Sigmoid colon (tissue), 7 donors: ENCODE measurements at regions of chr10 and their contacts with region 1.

Region 1: DNA sequence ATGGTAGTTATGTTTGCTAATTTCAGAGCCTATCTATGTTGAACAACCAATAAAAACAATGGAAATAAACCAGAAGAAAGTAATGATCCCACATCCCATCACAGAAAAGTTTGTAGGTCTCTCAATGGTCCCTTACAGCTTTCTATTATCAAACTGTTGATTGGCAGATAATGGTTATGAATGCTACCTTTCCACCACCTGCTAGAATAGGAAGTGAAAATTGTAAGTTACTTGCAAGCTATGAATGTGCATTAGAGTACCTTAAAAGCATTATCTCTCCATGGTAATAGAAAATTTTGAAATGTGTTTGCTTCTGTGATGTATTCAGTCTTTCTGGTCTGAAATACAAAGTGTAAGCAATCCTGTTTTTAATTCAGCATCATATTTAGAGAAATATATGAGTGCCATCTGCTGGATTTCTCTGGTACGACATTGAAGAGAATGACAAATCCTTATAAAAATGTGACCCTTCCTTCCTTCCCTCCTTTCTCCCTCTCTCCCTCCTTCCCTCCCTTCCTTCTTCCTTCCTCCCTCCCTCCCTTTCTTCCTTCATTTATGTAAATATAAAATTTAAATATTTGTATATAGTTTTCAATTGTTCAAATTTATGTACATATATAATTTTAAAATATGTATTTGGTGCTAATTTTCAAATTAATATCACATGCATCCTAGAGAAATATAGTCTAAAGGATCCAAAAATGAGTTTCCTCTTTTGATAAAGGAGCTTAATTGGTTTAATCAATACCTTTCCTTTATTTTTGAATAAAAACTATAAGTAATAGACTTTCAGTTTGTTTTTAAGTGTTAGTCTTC is 41.4 kb upstream of the PNLIPRP3 start:
- DNase-seq: no peak
- H3K4me3 ChIP-seq: no peak overlapping the region
- H3K27ac ChIP-seq: no peak overlapping the region
- H3K4me1 ChIP-seq: no peaks in the 10 kb centered on the region
- H3K27me3 ChIP-seq: no peaks in the 10 kb centered on the region
- CTCF ChIP-seq: peak; percentile 7 to 56 (median 42)
- EP300 ChIP-seq: no peak
- POLR2A ChIP-seq: no peak

Region 2: DNA sequence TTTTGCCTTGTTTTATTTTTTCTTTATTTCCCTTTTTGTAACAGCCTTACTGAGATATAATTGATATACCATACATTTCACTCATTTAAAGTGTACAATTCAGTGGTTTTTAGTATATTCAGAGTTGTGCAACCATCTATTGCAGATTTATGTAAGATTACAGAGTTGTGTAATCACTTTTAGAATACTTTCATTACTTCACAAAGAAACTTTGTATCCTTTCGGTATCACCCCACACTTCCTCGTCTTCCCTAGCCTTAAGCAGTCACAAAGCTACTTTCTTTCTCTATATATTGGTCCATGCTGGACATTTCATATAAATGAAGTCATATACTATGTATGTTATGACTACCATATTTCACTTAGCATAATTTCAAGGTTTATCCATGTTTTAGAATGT is 1218.5 kb before region 1 on chr10:
- intact Hi-C with region 1: loop called (anchors 10 kb)
- DNase-seq: no peak
- H3K4me3 ChIP-seq: no peak overlapping the region
- H3K27ac ChIP-seq: no peak overlapping the region
- H3K4me1 ChIP-seq: no peaks in the 10 kb centered on the region
- H3K27me3 ChIP-seq: no peaks in the 10 kb centered on the region
- CTCF ChIP-seq: no peak
- EP300 ChIP-seq: no peak
- POLR2A ChIP-seq: no peak

Region 3: DNA sequence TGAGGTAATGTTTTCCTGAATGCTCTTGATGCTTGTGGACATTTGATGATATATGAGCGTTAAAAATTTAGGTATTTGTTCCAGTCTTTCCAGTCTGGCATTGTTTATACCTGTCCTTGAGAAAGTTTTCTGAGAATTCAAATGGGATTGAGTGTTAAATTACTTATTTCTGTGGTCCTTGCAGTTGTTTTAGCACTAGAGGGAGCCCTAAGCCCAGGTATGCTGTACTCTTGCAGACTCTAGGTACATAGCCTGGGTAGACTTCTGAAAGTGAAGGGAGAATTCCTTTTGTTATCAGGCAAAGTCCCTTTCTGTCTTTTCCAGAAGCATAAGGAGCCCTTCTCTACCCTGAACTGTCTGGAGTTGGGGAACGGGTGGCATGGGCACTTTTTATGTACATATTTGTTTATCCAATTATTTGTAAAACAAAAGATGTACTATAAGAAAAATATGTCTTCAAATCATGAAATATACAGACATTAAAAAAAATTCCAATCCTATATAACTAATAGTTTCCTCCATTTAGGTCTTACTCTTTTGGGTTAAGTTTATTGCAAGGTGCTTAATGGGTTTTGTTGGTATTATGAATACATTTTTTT is 1030.9 kb before region 1 on chr10:
- intact Hi-C with region 1: loop called (anchors 5 kb)
- DNase-seq: no peak
- H3K4me3 ChIP-seq: no peak overlapping the region
- H3K27ac ChIP-seq: no peak overlapping the region
- H3K4me1 ChIP-seq: no peaks in the 10 kb centered on the region
- H3K27me3 ChIP-seq: no peaks in the 10 kb centered on the region
- CTCF ChIP-seq: peak in 3 of 4 experiments; percentile 9 to 27 (median 22)
- EP300 ChIP-seq: no peak
- POLR2A ChIP-seq: no peak

Region 4: DNA sequence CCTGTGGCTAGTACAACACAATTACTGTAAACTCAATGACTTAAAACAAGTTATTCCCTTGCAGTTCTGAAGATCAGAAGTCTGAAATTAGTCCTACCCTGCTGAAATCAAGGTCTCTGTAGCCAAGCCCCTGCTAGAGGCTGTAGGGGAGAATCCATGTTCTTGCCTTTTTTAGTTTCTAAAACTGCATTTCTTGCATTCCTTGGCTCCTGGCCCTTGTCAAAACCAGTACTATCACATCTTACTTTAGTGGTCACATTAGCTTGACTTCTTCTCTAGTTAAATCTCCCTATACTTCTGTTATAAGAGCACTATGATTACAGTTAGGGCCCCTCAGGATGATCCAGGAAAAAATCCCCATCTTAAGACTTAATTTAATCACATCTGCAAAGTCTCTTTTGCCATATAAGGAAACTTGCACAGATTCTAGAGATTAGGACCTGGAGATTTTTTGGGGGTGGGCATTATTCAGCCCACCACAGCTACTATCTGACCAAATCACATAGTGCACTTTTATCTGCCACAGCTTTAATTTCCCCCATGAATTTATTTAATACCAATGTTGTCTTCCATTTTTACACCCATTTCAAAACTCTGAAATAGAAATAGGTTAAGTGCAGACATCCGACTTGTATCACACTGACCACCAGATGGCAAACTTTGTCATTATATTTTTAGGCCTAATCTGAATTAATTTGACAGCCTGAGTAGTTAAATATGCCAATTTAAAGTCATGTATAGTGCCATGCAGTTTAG is 680.0 kb before region 1 on chr10:
- intact Hi-C with region 1: loop called (anchors 5 kb)
- DNase-seq: no peak
- H3K4me3 ChIP-seq: no peak overlapping the region
- H3K27ac ChIP-seq: no peak overlapping the region
- H3K4me1 ChIP-seq: no peaks in the 10 kb centered on the region
- H3K27me3 ChIP-seq: no peaks in the 10 kb centered on the region
- CTCF ChIP-seq: no peak
- EP300 ChIP-seq: no peak
- POLR2A ChIP-seq: no peak

Region 5: GRCh38 chr10:115790220-115790619 is 596.0 kb before region 1 on chr10:
- intact Hi-C with region 1: loop called (anchors 10 kb)
- DNase-seq: no peak
- H3K4me3 ChIP-seq: no peak overlapping the region
- H3K27ac ChIP-seq: no peak overlapping the region
- H3K4me1 ChIP-seq: no peaks in the 10 kb centered on the region
- H3K27me3 ChIP-seq: no peaks in the 10 kb centered on the region
- CTCF ChIP-seq: no peak
- EP300 ChIP-seq: no peak
- POLR2A ChIP-seq: no peak

Region 6: DNA sequence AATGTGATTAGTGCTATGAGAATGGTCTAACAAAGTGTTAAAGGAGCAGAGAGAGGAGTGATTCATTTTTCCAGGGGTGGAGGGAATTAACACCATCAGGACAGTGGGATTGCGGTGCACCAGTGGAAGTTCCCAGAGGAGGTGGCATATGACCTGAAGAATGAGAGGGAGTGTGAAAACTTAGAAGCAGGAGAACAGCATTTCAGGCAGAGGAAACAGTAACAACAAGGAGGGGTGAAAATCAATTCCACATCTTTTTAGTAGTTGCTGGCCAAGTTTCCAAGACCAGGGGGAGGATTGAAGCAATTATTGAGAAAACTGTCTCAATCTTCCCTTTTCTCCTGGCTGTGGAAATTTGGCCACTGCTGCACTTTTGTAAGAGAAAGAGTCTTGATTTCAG is 85.7 kb before region 1 on chr10:
- intact Hi-C with region 1: no loop called
- DNase-seq: no peak
- H3K4me3 ChIP-seq: no peak overlapping the region
- H3K27ac ChIP-seq: no peak overlapping the region
- H3K4me1 ChIP-seq: no peaks in the 10 kb centered on the region
- H3K27me3 ChIP-seq: no peaks in the 10 kb centered on the region
- CTCF ChIP-seq: no peak
- EP300 ChIP-seq: no peak
- POLR2A ChIP-seq: no peak

Region 7: DNA sequence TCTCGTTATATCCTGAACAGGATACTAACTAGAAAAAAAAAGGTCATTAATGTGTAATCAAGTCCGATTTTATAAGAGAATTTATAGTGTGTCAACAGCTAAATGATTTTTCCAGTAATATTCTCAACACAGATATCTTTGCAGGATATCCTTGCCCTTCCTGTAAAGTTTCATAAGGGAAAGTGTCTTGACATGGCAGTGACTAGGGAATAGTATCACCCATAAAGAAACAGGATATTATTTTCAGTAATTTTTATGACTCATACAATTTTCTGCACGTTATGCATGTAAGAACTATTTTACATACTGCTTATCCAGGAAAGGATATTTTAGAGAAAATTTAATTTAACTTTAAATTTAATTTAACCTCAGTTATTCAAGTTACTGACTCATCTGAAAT is 140.0 kb after region 1 on chr10:
- intact Hi-C with region 1: no loop called
- DNase-seq: no peak
- H3K4me3 ChIP-seq: no peak overlapping the region
- H3K27ac ChIP-seq: no peak overlapping the region
- H3K4me1 ChIP-seq: no peaks in the 10 kb centered on the region
- H3K27me3 ChIP-seq: no peaks in the 10 kb centered on the region
- CTCF ChIP-seq: no peak
- EP300 ChIP-seq: no peak
- POLR2A ChIP-seq: no peak